GM10248 (cell line): ENCODE measurements at regions of chr5 and their contacts with region 1.

Region 1: DNA sequence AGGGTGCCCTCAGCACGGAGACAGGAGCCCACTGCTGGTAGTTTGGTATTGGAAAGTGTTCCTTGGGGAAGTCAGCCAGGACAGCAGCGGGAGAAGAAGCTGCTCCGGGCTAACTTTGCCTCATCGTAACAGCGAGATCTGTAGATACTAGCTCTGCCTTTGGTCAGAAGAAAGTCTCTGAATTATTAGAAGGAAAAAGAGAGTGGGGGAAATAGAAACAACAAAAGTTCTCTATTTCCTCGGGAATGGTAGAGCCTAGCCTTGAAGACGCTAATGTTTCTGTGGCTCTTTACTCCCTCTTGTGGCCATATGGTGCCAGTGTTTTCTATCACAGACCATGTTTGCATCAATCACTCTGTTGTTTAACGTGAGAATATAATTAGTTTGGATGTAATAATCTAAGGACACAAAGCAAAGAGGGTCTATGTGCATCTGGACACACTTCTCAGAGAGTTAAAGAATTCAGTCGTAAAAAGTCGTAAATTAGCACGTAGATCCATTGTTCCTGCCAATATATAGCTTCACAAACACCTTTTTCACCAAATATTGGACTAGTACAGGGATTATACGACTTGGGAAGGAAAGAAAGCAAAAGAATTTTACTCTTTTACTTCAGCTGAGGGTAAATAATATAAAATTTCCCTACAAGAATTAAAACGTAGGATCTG is 40.2 kb upstream of the HSD17B4 start:
- DNase-seq: peak; percentile 45
- CTCF ChIP-seq: peak; percentile 91

Region 2: GRCh38 chr5:119009131-119009530 is 402.9 kb before region 1 on chr5:
- CTCF ChIA-PET with region 1: interaction called, 12 read pairs
- POLR2A ChIA-PET with region 1: no interaction called
- DNase-seq: no peak
- CTCF ChIP-seq: no peak

Region 3: GRCh38 chr5:119070828-119071572 is 341.1 kb before region 1 on chr5 and contains the start of gene DMXL1:
- CTCF ChIA-PET with region 1: interaction called, 14 read pairs
- POLR2A ChIA-PET with region 1: no interaction called
- DNase-seq: peak; percentile 85
- CTCF ChIP-seq: no peak

Region 4: DNA sequence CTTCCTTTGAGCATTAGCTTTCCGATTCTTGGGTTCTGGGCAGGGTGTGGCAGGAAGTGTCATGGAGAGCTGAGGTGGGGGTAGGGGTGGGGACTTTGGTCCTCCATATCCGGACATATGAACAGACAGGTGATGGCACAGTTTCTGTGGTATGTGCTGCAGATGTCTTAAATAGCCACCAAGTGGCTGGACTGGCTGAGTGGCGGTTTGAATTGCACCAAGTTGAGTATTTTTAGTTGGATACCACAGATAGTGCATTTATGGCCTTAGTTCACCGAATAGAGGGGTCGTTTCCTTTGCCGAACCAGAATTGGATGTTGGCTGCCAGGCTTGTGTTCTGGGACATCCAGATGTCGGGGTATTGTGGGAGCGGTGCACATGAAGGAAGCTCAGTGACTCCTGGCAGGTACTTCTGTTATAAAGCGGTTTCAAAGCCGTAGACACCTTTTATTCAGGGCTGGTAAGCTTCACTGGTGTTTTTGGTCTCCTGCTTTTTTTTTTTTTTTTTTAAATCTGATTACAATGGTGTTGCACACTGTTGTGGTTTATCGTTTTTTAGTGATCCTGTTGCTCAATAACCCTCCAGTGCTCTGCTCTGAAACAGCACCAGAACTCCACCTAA is 71.4 kb before region 1 on chr5:
- CTCF ChIA-PET with region 1: interaction called, 77 read pairs
- POLR2A ChIA-PET with region 1: no interaction called
- DNase-seq: peak; percentile 55
- CTCF ChIP-seq: no peak

Region 5: DNA sequence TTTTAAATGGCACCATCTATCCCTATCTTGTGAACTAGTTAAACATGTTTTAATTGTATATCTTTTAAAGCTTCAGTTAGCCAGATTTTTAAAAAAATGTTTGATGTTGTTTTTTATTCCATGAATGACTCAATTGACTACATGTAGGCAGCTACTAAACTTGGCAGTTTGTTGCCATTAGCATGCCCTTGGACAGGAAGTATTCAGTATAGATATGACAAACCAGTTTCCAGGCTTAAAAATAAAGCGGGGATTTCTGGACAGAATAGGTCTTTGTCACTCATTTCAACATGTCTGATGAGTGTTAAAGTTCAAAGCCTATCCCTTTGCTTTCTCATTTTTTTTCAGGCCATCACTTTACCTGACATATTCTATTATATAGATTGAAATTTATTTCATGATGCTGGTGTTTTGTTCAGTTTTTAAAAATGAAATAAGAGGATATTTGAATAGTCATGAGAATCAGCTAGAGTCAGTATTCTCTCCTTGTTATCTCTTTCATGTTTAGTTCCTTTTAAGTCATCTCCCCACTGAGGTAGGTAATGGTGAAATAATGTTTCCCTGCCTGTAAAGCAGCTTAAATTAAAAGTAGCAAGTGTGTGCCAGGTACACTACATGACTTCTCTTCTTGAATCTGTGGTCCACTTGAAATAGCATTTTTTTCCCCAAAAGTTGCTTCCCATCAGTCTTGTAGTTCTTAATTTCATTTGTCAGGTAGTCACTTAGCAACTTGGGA is 44.4 kb before region 1 on chr5:
- CTCF ChIA-PET with region 1: interaction called, 26 read pairs
- POLR2A ChIA-PET with region 1: interaction called, 4 read pairs
- DNase-seq: no peak
- CTCF ChIP-seq: no peak

Region 6: DNA sequence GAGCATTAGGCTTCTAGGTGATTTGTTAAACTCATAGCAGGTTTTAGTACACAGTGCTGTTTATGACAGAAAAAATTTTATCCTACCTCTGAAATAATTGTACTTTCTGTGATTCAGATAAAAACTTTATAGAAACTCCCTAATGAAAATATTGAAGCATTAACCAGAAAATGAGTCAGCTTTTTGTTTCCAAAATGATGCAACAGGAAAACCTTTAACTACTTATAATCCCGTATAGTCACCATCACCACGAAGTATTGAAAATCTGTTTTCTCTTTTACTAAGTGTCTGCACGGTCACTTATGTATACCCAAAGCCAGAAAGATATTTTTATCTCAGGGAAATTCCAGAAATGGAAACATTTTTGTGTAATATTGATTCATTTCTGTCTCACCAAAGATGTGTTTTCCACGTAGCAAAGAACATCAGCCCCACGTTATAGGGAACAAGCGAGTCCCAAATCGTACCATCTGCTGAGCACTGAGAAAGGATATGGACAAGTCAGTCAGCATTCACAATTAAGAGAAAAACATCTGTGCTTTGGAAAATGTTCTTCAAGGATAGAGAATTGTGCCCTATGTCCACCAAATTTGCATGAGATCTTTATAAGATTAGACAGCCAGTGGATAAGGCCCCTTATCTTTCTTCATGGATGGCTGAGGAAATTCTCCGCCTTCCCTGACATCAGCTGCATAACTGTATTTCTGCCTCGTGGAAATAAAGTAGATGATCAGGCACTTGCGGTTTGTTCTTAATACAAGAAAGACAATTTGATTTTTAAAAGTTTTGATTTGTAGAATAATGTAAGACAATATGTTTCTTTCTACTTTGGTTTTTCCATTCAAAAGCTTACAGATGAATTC is 14.3 kb before region 1 on chr5:
- CTCF ChIA-PET with region 1: interaction called, 60 read pairs
- POLR2A ChIA-PET with region 1: no interaction called
- DNase-seq: no peak
- CTCF ChIP-seq: no peak